Activated CD4-positive, alpha-beta memory T cell treated with anti-CD3 and anti-CD28 coated beads for 36 hours (primary cell): ENCODE measurements at regions of chr7 and their contacts with region 1.

Region 1: DNA sequence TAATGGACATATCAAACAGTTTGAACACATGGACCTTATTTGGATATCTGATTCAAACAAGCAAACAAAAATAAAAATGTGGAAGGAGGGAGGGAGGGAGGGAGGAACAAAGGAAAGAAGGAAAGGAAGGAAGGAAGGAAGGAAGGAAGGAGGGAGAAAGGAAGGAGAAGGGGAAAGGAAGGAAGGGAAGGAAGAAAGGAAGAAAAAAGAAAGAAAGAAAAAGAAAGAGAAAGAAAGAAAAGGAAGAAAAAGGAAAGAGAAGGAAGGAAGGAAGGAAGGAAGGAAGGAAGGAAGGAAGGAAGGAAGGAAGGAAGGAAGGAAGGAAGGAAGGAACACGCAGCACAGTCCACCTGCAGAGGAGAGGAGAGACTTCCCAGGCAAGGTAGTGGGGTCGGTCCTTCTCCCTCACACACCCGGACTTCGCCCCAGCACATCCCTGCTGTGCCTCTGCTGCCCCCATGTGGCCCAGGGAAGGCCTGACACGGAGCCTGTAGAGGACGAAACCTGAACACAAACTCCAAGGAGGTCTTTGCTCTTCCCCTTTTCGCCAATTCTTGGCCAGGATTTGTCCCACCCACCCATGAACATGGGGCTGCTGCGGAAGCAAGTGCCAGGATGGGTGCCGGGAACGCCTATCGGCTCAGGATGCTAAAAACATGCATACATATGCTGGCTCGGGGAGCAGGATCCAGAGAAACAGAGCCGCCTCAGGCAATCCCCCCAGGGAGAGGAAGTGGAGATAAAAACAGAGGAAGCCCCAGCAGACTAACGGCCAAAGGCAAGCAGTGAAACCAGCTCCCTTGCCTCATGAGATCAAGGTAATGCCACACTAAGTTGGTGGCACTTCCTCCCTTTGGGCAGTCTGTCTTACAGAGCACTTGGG is 52.3 kb upstream of the DGKI start:
- DNase-seq: peak; percentile 84
- H3K4me3 Mint-ChIP-seq: no peak overlapping the region
- H3K27ac Mint-ChIP-seq: no peak overlapping the region
- H3K4me1 Mint-ChIP-seq: peaks cover 33% of the 10 kb centered on the region
- H3K27me3 Mint-ChIP-seq: no peaks in the 10 kb centered on the region

Region 2: GRCh38 chr7:137656227-137656849 is 242.7 kb before region 1 on chr7:
- CTCF ChIA-PET with region 1: interaction called, 75 read pairs
- POLR2A ChIA-PET with region 1: no interaction called
- intact Hi-C with region 1: loop called (anchors 1 kb)
- DNase-seq: peak; percentile 81
- H3K4me3 Mint-ChIP-seq: no peak overlapping the region
- H3K27ac Mint-ChIP-seq: no peak overlapping the region
- H3K4me1 Mint-ChIP-seq: no peaks in the 10 kb centered on the region
- H3K27me3 Mint-ChIP-seq: peaks cover 4% of the 10 kb centered on the region

Region 3: GRCh38 chr7:137747359-137748031 is 151.6 kb before region 1 on chr7:
- CTCF ChIA-PET with region 1: no interaction called
- POLR2A ChIA-PET with region 1: no interaction called
- intact Hi-C with region 1: no loop called
- DNase-seq: no peak
- H3K4me3 Mint-ChIP-seq: no peak overlapping the region
- H3K27ac Mint-ChIP-seq: no peak overlapping the region
- H3K4me1 Mint-ChIP-seq: no peaks in the 10 kb centered on the region
- H3K27me3 Mint-ChIP-seq: peaks cover under 1% of the 10 kb centered on the region

Region 4: DNA sequence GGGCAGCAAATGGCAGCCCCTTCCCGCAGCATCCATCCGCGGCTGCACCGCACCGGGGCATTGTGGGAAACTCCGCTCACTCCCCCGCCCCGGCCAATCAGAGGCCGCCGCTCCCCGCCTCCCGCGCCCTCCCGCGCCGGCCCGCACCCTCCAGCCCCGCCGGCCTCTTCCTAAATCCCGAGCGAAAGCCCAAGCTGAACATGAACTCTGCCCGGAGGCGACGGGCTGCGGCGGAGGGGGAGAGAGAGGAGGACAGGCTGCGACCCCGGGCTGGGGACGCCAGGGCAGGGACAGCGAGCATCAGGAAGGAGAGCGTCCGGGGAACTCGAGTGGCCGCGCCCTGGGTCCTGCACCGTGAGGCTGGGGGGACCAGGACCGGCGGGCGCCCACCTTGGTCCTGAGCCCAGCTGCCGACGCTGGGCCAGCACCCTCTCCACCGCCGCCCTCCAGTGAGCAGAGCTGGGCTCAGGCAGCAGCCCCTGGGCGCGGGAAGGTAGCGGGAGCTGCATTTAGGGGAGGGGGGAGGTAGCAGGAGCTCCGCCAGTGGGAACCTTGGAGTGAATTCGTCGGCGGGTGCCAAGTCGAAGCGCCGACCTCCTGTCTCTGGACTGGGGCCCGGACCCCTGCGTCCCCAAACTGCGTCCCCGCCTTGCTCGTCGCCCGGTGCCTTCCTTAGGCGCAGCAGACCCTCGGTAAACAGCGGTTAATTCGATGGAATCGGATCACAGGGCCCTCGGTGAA is 52.1 kb before region 1 on chr7 and contains the start of gene DGKI:
- CTCF ChIA-PET with region 1: no interaction called
- POLR2A ChIA-PET with region 1: no interaction called
- intact Hi-C with region 1: loop called (anchors 5 kb)
- DNase-seq: peak; percentile 18
- H3K4me3 Mint-ChIP-seq: peak within 1 kb of the TSS; percentile 61
- H3K27ac Mint-ChIP-seq: no peak within 1 kb of the TSS
- H3K4me1 Mint-ChIP-seq: peaks cover 17% of the 10 kb centered on the region
- H3K27me3 Mint-ChIP-seq: peaks cover 48% of the 10 kb centered on the region
- total RNA-seq, gene DGKI: 5.4 to 7.0 TPM

Region 5: GRCh38 chr7:137923380-137923779 is 24.3 kb after region 1 on chr7:
- CTCF ChIA-PET with region 1: interaction called, 21 read pairs
- POLR2A ChIA-PET with region 1: no interaction called
- intact Hi-C with region 1: no loop called
- DNase-seq: peak; percentile 36
- H3K4me3 Mint-ChIP-seq: no peak overlapping the region
- H3K27ac Mint-ChIP-seq: peak overlapping the region; percentile 49
- H3K4me1 Mint-ChIP-seq: peaks cover 38% of the 10 kb centered on the region
- H3K27me3 Mint-ChIP-seq: no peaks in the 10 kb centered on the region

Region 6: DNA sequence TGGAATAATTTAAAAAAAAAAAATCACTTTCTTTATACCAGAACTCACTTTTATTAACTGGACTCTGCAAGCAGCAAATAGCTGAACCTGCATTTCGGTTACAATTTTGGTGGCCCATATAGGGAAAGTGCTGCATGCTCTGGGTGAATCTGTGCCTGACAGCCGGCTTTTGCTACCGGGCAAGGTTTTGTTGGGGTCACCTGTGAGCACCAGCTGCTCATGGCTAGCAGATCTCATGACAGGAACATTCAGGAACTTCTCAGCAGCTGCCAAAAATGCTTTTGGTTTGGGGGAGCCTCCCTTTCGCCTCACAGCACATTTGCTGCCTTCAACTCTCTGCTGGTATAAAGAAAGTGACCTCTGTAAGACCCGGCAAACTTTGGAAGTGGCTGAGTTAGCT is 116.0 kb after region 1 on chr7:
- CTCF ChIA-PET with region 1: interaction called, 433 read pairs
- POLR2A ChIA-PET with region 1: no interaction called
- intact Hi-C with region 1: no loop called
- DNase-seq: no peak
- H3K4me3 Mint-ChIP-seq: no peak overlapping the region
- H3K27ac Mint-ChIP-seq: no peak overlapping the region
- H3K4me1 Mint-ChIP-seq: no peaks in the 10 kb centered on the region
- H3K27me3 Mint-ChIP-seq: no peaks in the 10 kb centered on the region

Region 7: DNA sequence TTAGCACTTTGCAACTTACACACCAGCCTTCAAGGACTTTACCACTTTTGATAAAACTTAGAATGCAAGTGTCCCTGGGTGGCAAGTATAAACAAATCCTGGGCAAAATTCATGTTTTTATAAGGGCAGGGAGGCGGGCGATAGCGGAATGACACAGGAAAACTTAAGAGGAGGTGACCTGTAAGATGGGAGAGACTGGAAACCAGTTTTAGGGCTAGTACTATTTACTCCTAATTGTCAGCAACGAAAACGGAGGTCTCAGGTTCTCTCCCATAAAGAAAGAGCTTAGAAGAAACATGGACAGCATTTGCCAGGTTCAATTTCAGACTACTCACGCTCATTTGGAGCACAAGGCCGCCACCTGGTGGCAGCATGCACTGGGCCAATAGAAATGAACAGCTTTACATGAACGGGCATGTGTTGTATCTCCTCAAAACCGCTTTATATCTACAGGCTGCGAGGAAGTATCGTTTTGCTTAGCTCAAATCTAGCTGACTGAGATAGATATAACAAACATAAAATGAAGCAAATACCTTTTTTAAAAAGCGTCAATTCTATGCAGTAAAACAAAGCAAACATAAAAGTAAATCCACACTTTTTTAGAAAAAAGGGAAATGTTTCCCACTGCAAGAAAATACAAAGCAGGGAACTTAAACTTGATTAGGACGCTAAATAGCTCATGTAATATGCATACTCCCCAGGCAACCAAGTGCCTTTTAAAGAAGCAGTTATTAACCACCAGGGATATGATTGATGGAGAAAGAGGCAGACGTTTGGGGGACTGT is 839.7 kb after region 1 on chr7:
- CTCF ChIA-PET with region 1: interaction called, 8 read pairs
- POLR2A ChIA-PET with region 1: no interaction called
- intact Hi-C with region 1: loop called (anchors 2 kb)
- DNase-seq: peak; percentile 92
- H3K4me3 Mint-ChIP-seq: no peak overlapping the region
- H3K27ac Mint-ChIP-seq: peak overlapping the region; percentile 23
- H3K4me1 Mint-ChIP-seq: peaks cover 8% of the 10 kb centered on the region
- H3K27me3 Mint-ChIP-seq: no peaks in the 10 kb centered on the region